Activated CD8-positive, alpha-beta memory T cell treated with anti-CD3 and anti-CD28 coated beads, Interleukin-2, amount 10 ng/mL, durations not matched to agents 7 days and 5 days (primary cell): ENCODE measurements at regions of chr1 and their contacts with region 1.

Region 1: DNA sequence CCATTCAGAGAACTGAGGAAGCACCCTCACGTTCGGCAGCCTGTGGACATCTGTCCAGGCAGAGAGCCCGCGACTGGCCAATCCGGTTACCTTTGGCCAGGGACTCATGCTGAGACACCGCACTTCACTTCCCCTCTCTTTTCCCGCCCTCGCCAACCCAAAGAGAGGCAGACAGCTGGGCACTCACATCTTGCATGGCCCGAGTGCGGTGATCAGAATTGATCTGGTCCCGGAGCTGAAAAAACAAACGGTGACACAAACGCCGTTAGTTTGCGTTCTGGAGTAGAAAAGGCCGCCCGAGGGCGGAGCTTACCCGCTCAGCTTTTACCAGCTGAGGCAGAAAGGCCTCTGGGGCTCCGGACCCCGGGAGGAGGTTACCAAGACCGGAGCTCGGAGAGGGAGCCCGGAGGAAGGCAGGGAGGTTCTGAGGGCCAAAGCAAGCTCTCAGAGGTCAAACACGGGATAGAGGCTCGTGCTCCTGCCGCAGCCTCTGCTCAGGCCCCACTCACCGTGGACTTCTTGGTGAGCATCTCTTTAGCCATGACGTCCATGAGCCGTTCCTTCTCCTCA is 376 bp downstream of the SF3A3 start:
- DNase-seq: peak; percentile 67
- ATAC-seq: peak; percentile 55
- H3K4me3 Mint-ChIP-seq: peak overlapping the region; percentile 86
- H3K27ac Mint-ChIP-seq: peak overlapping the region; percentile 81
- H3K4me1 Mint-ChIP-seq: peaks cover 22% of the 10 kb centered on the region
- H3K27me3 Mint-ChIP-seq: no peaks in the 10 kb centered on the region

Region 2: DNA sequence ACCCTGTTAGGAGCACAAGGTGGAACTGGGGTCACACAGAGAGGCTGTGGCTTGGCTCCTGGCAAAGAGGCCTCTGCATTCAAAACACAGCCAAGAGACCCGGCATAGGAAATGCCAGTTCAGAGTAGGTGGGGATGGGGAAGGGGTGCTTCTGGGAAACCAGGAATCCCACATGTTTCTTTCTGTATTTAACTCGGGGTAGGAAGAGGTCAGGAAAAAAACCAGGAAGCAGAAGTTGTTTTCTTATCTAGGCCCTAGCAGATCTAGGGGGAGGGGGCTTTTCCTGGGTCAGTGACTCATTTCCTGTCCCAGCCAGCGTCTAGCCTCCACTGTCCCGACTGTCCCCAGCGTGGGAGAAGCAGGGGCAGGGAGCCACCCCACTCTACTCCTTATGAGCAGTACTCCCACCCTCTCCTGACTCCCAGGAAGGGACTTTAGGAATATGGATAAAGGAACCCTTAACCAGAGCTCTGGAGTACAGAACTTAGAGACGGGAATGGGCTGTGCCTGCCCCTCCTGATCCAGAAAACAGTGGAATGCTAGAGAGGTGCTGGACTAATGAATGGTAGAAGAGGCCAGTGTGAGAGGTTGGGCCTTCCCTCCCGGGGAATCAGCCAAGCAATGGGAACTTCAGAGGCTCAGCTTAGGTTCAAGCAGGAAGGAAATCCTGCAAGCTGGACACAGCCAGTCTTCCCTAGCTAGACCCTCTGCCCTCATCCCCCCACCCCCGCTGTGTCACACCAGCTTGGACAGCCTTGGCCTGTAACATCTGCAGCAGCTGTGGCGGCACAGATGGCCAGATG is 10.2 kb after region 1 on chr1:
- CTCF ChIA-PET with region 1: interaction called, 29 read pairs
- DNase-seq: no peak
- ATAC-seq: no peak
- H3K4me3 Mint-ChIP-seq: no peak overlapping the region
- H3K27ac Mint-ChIP-seq: peak overlapping the region; percentile 85
- H3K4me1 Mint-ChIP-seq: peaks cover 54% of the 10 kb centered on the region
- H3K27me3 Mint-ChIP-seq: no peaks in the 10 kb centered on the region

Region 3: DNA sequence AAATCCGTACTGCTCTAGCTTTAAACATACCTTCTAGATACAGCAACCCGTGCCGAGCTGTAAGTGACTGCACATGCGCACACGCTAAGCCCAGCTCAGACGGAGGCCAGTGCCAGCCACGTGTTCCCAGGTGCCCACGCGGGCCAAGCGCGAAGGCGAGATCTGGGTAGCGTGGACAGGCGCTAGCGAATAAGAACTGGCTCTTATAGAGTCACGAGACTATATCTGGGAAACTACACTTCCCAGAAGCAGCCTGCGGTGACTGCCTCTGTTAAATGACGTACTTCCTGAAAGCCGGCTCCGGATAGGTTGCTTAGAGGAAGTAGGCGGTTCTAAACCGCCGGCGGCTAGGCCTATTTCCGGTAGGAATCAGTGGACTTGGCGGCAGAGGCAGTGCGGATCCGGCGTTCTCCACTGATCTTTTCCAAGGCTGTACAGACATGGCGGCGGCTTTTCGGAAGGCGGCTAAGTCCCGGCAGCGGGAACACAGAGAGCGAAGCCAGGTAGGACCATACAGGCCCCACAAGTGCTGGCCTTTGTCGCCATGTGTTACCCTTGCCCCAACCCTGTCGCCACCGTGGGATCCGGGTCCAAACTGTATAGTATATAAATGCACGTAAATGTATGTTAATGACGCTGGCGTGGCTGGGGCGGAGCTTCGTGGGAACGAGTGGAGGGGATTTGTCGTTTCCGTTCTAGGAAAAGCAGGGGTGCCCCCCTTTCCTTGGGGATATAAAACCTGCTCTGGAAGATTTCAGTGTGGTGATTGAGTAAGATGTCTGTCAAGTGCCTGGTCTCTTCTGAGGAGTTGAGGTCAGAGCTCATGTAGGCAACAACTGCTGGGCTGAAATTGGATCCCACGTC is 23.1 kb after region 1 on chr1 and contains the start of gene UTP11:
- CTCF ChIA-PET with region 1: interaction called, 87 read pairs
- DNase-seq: peak; percentile 96
- ATAC-seq: peak; percentile 93
- H3K4me3 Mint-ChIP-seq: peak within 1 kb of the TSS; percentile 97
- H3K27ac Mint-ChIP-seq: peak within 1 kb of the TSS; percentile 98
- H3K4me1 Mint-ChIP-seq: peaks cover 57% of the 10 kb centered on the region
- H3K27me3 Mint-ChIP-seq: no peaks in the 10 kb centered on the region
- total RNA-seq, gene UTP11: 32.4 to 49.6 TPM

Region 4: DNA sequence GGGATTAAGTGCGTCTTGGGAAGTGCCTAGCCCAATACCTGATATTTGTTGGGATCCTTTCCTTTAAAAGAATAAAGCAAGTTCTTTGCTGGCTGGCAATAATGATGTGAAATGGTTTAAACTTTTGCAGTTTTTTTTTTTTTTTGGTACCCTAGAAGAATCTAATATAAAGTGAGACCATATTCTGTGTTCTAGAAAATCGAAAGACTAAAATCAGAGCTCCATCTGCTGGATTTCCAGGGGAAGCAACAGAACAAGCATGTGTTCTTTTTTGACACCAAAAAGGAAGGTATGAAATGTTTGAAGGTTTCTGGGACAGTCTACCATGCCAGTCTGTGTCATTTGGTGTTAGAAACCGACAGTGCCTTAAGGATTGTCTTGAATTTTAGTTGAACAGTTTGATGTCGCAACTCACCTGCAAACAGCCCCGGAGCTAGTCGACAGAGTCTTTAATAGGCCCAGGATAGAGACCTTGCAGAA is 29.5 kb after region 1 on chr1:
- CTCF ChIA-PET with region 1: interaction called, 87 read pairs
- DNase-seq: no peak
- ATAC-seq: peak; percentile 47
- H3K4me3 Mint-ChIP-seq: no peak overlapping the region
- H3K27ac Mint-ChIP-seq: no peak overlapping the region
- H3K4me1 Mint-ChIP-seq: peaks cover 29% of the 10 kb centered on the region
- H3K27me3 Mint-ChIP-seq: no peaks in the 10 kb centered on the region